ENCODE measurements at regions of chr11 and their contacts with region 1.

Region 1: GRCh38 chr11:117843666-117844484 is 19.3 kb upstream of the FXYD2 start:
- DNase-seq: peak; percentile 71
- H3K4me3 ChIP-seq: no peak overlapping the region
- H3K27ac ChIP-seq: no peak overlapping the region
- H3K4me1 ChIP-seq: no peaks in the 10 kb centered on the region
- H3K27me3 ChIP-seq: no peaks in the 10 kb centered on the region
- CTCF ChIP-seq: peak; percentile 99

Region 2: DNA sequence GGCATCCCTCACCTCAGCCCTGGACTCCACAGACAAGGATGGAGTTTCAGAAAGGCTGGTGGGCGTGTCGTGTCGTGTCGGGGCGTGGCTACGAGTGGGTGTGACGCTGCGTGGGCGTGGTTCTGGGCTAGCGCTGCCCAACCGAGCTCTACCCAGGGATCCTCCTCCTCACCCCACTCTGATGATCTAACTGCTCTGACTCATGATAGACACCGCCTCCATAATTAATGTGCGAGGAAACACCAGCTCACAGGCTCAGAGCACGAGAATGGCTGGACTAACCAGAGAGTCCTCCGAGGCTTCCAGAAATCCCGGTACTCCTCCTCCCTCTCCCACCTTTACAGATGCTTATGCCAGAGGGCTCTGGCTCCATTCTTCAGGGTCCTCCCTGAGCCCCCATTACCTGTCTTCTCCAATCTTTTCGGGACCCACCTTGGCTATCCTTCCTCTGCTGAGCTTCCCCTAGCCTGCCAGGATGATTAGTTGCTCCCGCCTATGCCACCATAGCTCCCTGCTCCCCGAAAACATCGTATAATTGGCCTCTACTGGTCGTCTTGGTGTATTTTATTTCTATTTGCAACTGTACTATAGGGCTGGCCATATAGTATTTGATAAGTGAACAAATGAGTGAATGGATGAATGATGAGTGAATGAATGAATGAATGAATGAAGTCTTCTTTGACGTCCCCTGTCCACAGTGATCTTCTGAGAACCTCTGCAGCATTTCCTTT is 63.5 kb after region 1 on chr11:
- CTCF ChIA-PET with region 1: no interaction called
- POLR2A ChIA-PET with region 1: interaction called, 4 read pairs
- intact Hi-C with region 1: loop called (anchors 2 kb)
- DNase-seq: peak; percentile 98
- H3K4me3 ChIP-seq: peak overlapping the region; percentile 44
- H3K27ac ChIP-seq: peak overlapping the region; percentile 87
- H3K4me1 ChIP-seq: peaks cover 18% of the 10 kb centered on the region
- H3K27me3 ChIP-seq: no peaks in the 10 kb centered on the region
- CTCF ChIP-seq: no peak

Region 3: GRCh38 chr11:118807800-118808778 is 964.2 kb after region 1 on chr11:
- CTCF ChIA-PET with region 1: no interaction called
- POLR2A ChIA-PET with region 1: no interaction called
- intact Hi-C with region 1: no loop called
- DNase-seq: no peak
- H3K4me3 ChIP-seq: no peak overlapping the region
- H3K27ac ChIP-seq: no peak overlapping the region
- H3K4me1 ChIP-seq: no peaks in the 10 kb centered on the region
- H3K27me3 ChIP-seq: no peaks in the 10 kb centered on the region
- CTCF ChIP-seq: no peak

Measured in A673 (cell line).